PC-9 (cell line): ENCODE measurements at regions of chr14 and their contacts with region 1.

Region 1: DNA sequence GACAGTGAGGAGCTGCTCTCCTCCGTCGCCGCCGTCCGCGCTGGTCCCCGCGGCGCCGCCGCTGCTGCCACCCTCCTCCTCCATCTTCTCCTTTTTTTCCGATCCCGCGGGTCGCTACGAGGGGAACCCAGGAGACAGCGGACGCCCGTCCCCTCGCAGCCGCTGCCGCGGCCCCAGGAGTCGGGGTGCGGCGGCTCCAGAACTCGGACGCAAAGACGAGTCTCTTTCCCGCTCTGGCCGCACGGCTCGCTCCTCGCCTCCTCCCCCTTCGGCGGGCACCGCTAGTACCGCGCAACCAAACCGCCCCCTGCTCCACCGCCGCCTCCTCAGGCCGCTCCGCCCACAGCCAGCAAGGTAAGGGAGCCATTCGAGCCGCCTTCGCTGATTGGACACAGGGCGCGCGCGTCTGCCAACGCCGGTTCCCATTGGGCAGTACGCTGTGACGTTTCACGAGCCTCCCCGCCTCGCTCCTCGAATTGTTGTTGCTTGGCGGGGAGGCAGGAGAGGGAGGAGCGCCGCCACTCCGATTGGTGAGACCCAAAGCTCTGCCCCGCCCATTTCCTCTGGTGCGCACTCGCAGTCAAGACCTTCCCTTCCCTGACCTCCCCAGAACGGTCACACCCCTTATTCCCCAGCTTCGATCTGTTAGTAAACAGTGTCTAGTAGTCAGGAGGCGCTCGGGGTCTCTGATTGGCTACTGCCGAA is at the start of gene RPS6KA5:
- DNase-seq: peak; percentile 88 to 96
- H3K4me3 ChIP-seq: peak within 1 kb of the TSS; percentile 82
- H3K27ac ChIP-seq: peak within 1 kb of the TSS; percentile 67
- H3K4me1 ChIP-seq: peaks cover 22% of the 10 kb centered on the region
- H3K27me3 ChIP-seq: no peaks in the 10 kb centered on the region
- CTCF ChIP-seq: 0 out of 2 replicates have a peak, but pooled peaks have one; percentile 15
- total RNA-seq, gene RPS6KA5: 3.0 and 3.5 TPM in 2 replicates

Region 2: GRCh38 chr14:91019673-91020072 is 40.8 kb before region 1 on chr14:
- CTCF ChIA-PET with region 1: no interaction called
- POLR2A ChIA-PET with region 1: no interaction called
- intact Hi-C with region 1: no loop called
- DNase-seq: no peak
- H3K4me3 ChIP-seq: no peak overlapping the region
- H3K27ac ChIP-seq: no peak overlapping the region
- H3K4me1 ChIP-seq: no peaks in the 10 kb centered on the region
- H3K27me3 ChIP-seq: no peaks in the 10 kb centered on the region
- CTCF ChIP-seq: no peak

Region 3: GRCh38 chr14:91127401-91127854 is 66.9 kb after region 1 on chr14:
- CTCF ChIA-PET with region 1: no interaction called
- POLR2A ChIA-PET with region 1: no interaction called
- intact Hi-C with region 1: loop called (anchors 1 kb)
- DNase-seq: peak; percentile 87 to 93
- H3K4me3 ChIP-seq: no peak overlapping the region
- H3K27ac ChIP-seq: peak overlapping the region; percentile 79; the same call in 1 of the 2 replicates
- H3K4me1 ChIP-seq: peaks cover 18% of the 10 kb centered on the region
- H3K27me3 ChIP-seq: no peaks in the 10 kb centered on the region
- CTCF ChIP-seq: no peak

Region 4: DNA sequence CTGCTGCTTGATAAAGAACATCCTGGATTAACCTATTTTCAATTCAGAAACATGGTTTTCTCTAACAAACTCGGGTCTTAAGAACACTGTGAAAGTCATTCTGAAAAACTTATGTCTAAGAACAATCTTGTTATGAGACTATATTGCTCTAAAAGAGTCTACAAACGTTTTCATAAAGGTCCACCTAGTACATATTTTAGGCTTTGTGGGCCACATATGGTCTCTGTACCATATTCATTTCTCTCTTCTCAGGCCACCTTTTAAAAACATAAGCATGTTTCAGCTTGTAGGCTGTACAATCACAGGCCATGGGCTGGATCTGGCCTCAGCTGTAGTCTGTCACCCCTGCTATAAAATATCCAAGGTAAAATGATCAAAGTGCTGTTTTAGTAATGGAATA is 409.7 kb after region 1 on chr14:
- CTCF ChIA-PET with region 1: no interaction called
- POLR2A ChIA-PET with region 1: no interaction called
- intact Hi-C with region 1: no loop called
- DNase-seq: no peak
- H3K4me3 ChIP-seq: no peak overlapping the region
- H3K27ac ChIP-seq: no peak overlapping the region
- H3K4me1 ChIP-seq: no peaks in the 10 kb centered on the region
- H3K27me3 ChIP-seq: no peaks in the 10 kb centered on the region
- CTCF ChIP-seq: no peak